ENCODE measurements at regions of chr11 and their contacts with region 1.

Region 1: GRCh38 chr11:110712659-110713448 is 617 bp upstream of the ARHGAP20 start:
- DNase-seq: no peak
- ATAC-seq: peak; percentile 17; the same call in 1 of the 2 replicates
- H3K4me3 ChIP-seq: peak overlapping the region; percentile 34
- H3K27ac ChIP-seq: no peak overlapping the region
- H3K4me1 ChIP-seq: peaks cover 8% of the 10 kb centered on the region; the same call in 1 of the 2 replicates
- H3K27me3 ChIP-seq: peaks cover 74% of the 10 kb centered on the region
- CTCF ChIP-seq: no peak

Region 2: DNA sequence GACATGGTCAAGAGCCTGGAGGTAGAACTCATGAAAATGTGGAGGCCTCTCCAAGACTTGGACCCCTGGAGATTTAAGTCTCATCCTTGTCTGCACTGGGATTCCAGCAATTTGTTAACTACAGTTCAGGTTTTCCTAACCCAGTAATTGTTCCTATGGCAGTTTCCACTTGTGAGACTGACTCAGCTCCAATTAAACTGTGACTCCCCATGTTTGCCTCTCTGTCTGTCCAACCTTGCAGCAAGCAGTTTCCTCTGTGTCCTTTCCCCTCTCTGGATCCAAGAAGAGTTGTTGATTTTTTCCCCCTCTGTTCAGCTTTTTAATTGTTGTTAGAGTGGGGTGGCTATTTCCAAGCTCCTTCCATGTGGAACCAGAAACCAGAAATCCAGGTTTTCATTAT is 15.6 kb after region 1 on chr11:
- CTCF ChIA-PET with region 1: no interaction called
- POLR2A ChIA-PET with region 1: no interaction called
- intact Hi-C with region 1: no loop called
- DNase-seq: no peak
- ATAC-seq: no peak
- H3K4me3 ChIP-seq: no peak overlapping the region
- H3K27ac ChIP-seq: no peak overlapping the region
- H3K4me1 ChIP-seq: no peaks in the 10 kb centered on the region
- H3K27me3 ChIP-seq: peaks cover 40% of the 10 kb centered on the region
- CTCF ChIP-seq: no peak

Region 3: GRCh38 chr11:111213256-111213655 is 500.4 kb after region 1 on chr11:
- CTCF ChIA-PET with region 1: no interaction called
- POLR2A ChIA-PET with region 1: no interaction called
- intact Hi-C with region 1: no loop called
- DNase-seq: peak; percentile 51
- ATAC-seq: no peak
- H3K4me3 ChIP-seq: no peak overlapping the region
- H3K27ac ChIP-seq: no peak overlapping the region
- H3K4me1 ChIP-seq: no peaks in the 10 kb centered on the region
- H3K27me3 ChIP-seq: no peaks in the 10 kb centered on the region
- CTCF ChIP-seq: no peak

Region 4: GRCh38 chr11:111259896-111260295 is 547.0 kb after region 1 on chr11:
- CTCF ChIA-PET with region 1: interaction called, 11 read pairs
- POLR2A ChIA-PET with region 1: no interaction called
- intact Hi-C with region 1: no loop called
- DNase-seq: peak; percentile 21
- ATAC-seq: no peak
- H3K4me3 ChIP-seq: no peak overlapping the region
- H3K27ac ChIP-seq: no peak overlapping the region
- H3K4me1 ChIP-seq: no peaks in the 10 kb centered on the region
- H3K27me3 ChIP-seq: peaks cover 75% of the 10 kb centered on the region
- CTCF ChIP-seq: no peak